MCF 10A (cell line): ENCODE measurements at regions of chr5 and their contacts with region 1.

Region 1: GRCh38 chr5:149990518-149991376 is 9.7 kb downstream of the TIGD6 start:
- DNase-seq: peak; percentile 91
- H3K4me3 Mint-ChIP-seq: no peak overlapping the region
- H3K27ac Mint-ChIP-seq: no peak overlapping the region
- H3K4me1 Mint-ChIP-seq: peaks cover 10% of the 10 kb centered on the region
- H3K27me3 Mint-ChIP-seq: no peaks in the 10 kb centered on the region
- CTCF ChIP-seq: peak; percentile 96

Region 2: DNA sequence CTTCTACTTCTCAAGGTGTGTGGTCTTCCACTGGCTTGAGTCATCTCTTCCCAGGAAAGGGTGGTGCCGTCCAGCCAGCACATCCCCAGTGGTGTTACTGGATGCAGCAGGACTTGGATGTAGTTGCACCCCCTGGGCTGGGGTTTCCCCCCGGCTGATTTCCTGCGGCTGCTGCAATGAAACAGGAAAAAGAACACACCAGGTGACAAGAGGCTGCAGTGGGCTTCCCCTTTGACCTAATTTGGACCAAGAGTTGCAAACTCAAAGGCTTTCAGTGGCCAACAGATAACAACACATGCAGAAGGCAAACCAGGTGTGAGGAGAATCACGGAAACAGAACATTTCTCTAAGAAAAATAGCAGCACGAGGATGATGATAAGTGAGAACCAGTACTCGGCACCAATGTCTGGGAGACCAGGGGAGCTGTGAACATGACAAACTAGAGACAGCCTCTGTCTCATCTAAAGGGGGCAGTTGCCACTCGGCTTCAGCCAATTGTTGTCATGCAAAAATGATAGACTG is 129.9 kb before region 1 on chr5:
- CTCF ChIA-PET with region 1: interaction called, 21 read pairs
- POLR2A ChIA-PET with region 1: no interaction called
- intact Hi-C with region 1: no loop called
- DNase-seq: peak; percentile 94
- H3K4me3 Mint-ChIP-seq: no peak overlapping the region
- H3K27ac Mint-ChIP-seq: peak overlapping the region; percentile 21
- H3K4me1 Mint-ChIP-seq: peaks cover 38% of the 10 kb centered on the region
- H3K27me3 Mint-ChIP-seq: no peaks in the 10 kb centered on the region
- CTCF ChIP-seq: no peak

Region 3: GRCh38 chr5:149979896-149980295 is 10.9 kb before region 1 on chr5:
- CTCF ChIA-PET with region 1: interaction called, 33 read pairs
- POLR2A ChIA-PET with region 1: interaction called, 3 read pairs
- intact Hi-C with region 1: no loop called
- DNase-seq: no peak
- H3K4me3 Mint-ChIP-seq: no peak overlapping the region
- H3K27ac Mint-ChIP-seq: no peak overlapping the region
- H3K4me1 Mint-ChIP-seq: peaks cover 22% of the 10 kb centered on the region
- H3K27me3 Mint-ChIP-seq: no peaks in the 10 kb centered on the region
- CTCF ChIP-seq: no peak

Region 4: GRCh38 chr5:150022163-150022540 is 31.4 kb after region 1 on chr5:
- CTCF ChIA-PET with region 1: interaction called, 10 read pairs
- POLR2A ChIA-PET with region 1: no interaction called
- intact Hi-C with region 1: no loop called
- DNase-seq: peak; percentile 98
- H3K4me3 Mint-ChIP-seq: peak overlapping the region; percentile 63
- H3K27ac Mint-ChIP-seq: peak overlapping the region; percentile 89
- H3K4me1 Mint-ChIP-seq: peaks cover 48% of the 10 kb centered on the region
- H3K27me3 Mint-ChIP-seq: no peaks in the 10 kb centered on the region
- CTCF ChIP-seq: no peak